Psoas muscle (tissue), 8 donors: ENCODE measurements at regions of chr2 and their contacts with region 1.

Region 1: DNA sequence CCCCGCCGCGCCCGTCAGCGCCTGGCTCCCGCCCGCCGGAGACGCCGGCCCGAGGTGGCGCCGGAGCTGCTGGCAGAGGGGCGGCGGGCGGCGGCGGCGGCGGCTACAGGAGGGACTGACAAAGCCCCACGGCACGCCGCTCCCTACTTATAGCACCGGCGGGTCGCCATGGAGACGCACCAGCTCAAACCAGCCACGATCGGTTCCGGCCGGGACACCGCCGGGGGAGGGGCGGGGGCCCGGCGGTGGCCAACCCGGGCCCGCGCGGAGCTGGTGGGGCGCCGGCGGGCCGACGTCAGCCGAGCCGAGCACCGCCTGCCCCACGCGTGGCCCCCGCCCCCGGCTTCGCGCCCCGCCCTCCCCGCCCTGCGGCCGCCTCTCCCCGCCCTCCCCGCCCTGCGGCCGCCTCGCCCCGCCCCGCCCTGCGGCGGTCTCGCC is at the start of gene ODC1:
- DNase-seq: peak; percentile 95 to 98
- ATAC-seq: peak; percentile 83 to 89 (median 84)
- H3K4me3 ChIP-seq: peak within 1 kb of the TSS; percentile 80
- H3K27ac ChIP-seq: peak within 1 kb of the TSS; percentile 93
- H3K4me1 ChIP-seq: peaks cover 15% of the 10 kb centered on the region
- H3K27me3 ChIP-seq: no peaks in the 10 kb centered on the region
- CTCF ChIP-seq: no peak
- total RNA-seq, gene ODC1: 56.8 to 143 (median 92.2) TPM

Region 2: DNA sequence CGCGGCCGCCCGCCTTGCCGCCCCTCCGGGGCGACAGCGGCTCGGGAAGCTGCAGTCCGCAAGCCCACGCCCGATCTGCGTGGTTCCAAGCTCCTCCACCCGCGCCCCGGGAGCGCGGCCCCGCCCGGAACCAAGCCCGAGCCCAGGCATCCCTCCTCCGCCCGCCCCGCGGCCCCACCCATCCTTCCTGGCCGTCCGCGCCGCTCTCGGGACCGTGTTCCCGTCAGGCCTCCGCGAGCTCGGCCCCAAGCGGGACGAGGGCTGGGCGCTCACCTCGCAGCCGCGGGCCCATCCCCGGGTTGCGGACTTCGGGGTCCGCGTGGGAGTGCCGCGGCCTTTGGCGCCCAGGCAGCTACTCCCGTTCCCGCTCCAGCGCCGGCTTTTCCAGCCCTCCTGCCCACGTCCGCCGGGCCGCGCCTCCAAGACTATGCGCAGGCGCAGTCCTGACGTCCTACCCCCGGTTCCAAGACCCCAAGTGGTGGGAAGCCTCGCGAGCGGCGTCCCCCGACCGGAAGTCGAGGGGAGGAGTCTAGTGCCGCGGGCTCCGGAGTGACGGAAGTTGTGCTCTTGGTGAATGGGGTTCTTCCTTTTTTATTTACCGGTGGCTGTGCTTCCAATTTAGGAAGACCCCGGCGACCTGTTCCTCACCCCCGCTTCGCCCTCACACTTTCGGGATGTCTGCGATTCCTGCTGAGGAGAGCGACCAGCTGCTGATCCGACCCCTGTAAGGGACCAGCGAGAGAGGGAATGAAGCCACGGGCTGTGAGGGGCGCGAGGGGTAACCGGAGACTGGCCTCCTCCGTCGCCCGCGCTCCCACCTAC is 1024.9 kb before region 1 on chr2 and contains the starts of genes CPSF3 and ITGB1BP1:
- intact Hi-C with region 1: loop called in 1 of 2 experiments (anchors 10 kb)
- DNase-seq: peak; percentile 98 to 99
- ATAC-seq: peak; percentile 97 to 98 (median 98)
- H3K4me3 ChIP-seq: peak within 1 kb of the TSS; percentile 89
- H3K27ac ChIP-seq: peak within 1 kb of the TSS; percentile 86
- H3K4me1 ChIP-seq: peaks cover 35% of the 10 kb centered on the region
- H3K27me3 ChIP-seq: no peaks in the 10 kb centered on the region
- CTCF ChIP-seq: no peak
- total RNA-seq, gene CPSF3: 14.4 to 21.8 (median 17.8) TPM
- total RNA-seq, gene ITGB1BP1: 47.5 to 138 (median 69.2) TPM

Region 3: DNA sequence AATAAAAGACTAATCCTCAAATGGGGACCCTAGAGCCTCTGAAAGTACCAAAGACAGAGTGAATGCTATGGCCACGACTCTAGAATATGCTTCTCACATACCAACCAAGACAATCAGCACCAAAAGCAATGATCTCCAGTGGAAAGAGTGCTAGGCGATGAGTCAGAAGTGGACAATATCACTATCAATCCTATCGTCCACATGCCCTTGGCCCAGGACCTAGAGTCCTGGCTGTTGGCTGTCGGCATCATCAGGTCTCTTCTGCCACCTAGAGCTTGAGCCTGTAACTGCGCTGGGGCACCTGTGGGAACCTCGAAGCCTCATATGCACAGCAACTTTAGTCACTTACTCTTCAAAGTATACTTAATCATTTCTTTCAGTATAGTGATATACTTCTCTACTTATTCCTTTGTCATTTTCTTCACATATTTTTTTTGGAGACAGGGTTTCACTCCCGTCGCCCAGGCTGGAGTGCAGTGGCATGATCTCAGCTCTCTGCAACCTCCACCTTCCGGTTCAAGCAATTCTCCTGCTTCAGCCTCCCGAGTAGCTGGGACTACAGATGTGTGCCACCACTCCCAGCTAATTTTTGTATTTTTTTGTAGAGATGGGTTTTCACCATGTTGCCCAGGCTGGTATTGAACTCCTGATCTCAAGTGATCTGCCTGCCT is 211.8 kb after region 1 on chr2:
- intact Hi-C with region 1: loop called (anchors 5 to 10 kb)
- DNase-seq: peak; percentile 55 to 64
- ATAC-seq: peak; percentile 87 to 97 (median 95)
- H3K4me3 ChIP-seq: no peak overlapping the region
- H3K27ac ChIP-seq: no peak overlapping the region
- H3K4me1 ChIP-seq: no peaks in the 10 kb centered on the region
- H3K27me3 ChIP-seq: no peaks in the 10 kb centered on the region
- CTCF ChIP-seq: peak; percentile 73